Naive thymus-derived CD4-positive, alpha-beta T cell (primary cell): ENCODE measurements at regions of chr16 and their contacts with region 1.

Region 1: DNA sequence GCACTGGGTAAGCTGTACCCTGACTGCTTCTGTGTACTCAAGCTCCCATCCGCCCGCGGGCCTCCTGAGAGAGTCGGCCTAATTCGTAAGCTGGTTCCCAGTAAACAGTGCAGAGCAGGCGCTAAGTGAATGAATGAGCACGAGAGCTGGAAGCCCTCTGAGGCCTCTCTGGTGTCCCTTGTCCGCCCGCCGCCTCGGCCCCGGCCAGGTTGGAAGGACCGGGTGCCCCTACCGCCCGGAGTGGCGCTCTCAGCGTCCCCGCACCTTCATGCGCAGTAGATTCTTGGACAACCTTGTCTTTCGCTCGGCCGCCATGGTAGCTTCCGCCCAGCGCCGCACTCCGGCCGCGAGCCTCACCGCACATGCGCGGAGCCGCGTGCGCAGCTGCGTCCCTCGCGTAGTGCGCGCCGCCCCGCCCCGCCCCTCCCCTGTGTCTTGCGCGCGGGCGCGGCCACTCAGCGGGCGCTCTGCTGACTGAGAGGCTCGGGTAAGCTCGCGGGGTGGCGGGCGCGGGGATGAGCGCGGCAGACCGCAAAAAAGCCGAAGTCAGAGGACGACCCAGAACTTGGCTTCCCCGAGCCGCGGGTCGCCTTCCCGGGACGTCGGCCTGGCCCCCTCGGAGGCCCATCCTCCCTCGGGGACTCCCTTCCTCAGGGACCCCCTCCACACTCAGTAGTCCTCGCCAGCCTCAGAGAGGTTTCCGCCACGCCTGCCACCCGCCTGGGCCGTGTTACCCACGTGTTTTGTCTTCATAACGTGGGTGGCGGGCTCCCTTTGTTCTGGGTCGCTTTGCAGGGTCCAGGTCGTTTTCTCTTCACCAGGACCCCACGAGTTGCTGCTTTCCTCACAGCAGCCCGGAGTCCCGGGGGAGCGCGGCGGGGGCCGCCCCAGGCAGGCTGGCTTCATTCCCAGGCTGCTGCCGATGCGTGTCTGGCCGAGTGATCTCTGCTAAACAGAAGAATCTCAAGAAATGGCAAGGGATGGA is at the start of gene MPHOSPH6:
- DNase-seq: peak; percentile 84 to 91 (median 88)
- ATAC-seq: peak; percentile 98
- H3K4me3 ChIP-seq: peak within 1 kb of the TSS; percentile 77
- H3K4me3 Mint-ChIP-seq: peak within 1 kb of the TSS; percentile 80 to 97 (median 95)
- H3K27ac ChIP-seq: peak within 1 kb of the TSS; percentile 84
- H3K27ac Mint-ChIP-seq: peak within 1 kb of the TSS; percentile 78 to 98 (median 96)
- H3K4me1 ChIP-seq: peaks cover 9 to 12% of the 10 kb centered on the region in 2 donors
- H3K4me1 Mint-ChIP-seq: peaks cover 18 to 38% (median 32%) of the 10 kb centered on the region in 7 donors
- H3K27me3 ChIP-seq: peaks cover 6% of the 10 kb centered on the region in 2 donors
- H3K27me3 Mint-ChIP-seq: peaks cover 8 to 41% (median 28%) of the 10 kb centered on the region in 5 donors
- total RNA-seq, gene MPHOSPH6: 15.6 to 30.4 (median 23.3) TPM

Region 2: GRCh38 chr16:81745704-81746558 is 424.2 kb before region 1 on chr16:
- CTCF ChIA-PET with region 1: no interaction called
- POLR2A ChIA-PET with region 1: no interaction called
- intact Hi-C with region 1: loop called in 1 of 2 experiments (anchors 5 kb)
- DNase-seq: peak; percentile 53 to 75 (median 71)
- ATAC-seq: peak; percentile 97
- H3K4me3 ChIP-seq: peak overlapping the region; percentile 66
- H3K4me3 Mint-ChIP-seq: peak overlapping the region; percentile 82 to 90 (median 86)
- H3K27ac ChIP-seq: peak overlapping the region; percentile 65
- H3K27ac Mint-ChIP-seq: peak overlapping the region; percentile 83 to 95 (median 88)
- H3K4me1 ChIP-seq: peaks cover 4 to 10% of the 10 kb centered on the region in 2 donors
- H3K4me1 Mint-ChIP-seq: peaks cover 6 to 33% (median 10%) of the 10 kb centered on the region in 7 donors
- H3K27me3 ChIP-seq: no peaks in the 10 kb centered on the region
- H3K27me3 Mint-ChIP-seq: peaks cover 0 to 6% (median 0%) of the 10 kb centered on the region in 5 donors

Region 3: DNA sequence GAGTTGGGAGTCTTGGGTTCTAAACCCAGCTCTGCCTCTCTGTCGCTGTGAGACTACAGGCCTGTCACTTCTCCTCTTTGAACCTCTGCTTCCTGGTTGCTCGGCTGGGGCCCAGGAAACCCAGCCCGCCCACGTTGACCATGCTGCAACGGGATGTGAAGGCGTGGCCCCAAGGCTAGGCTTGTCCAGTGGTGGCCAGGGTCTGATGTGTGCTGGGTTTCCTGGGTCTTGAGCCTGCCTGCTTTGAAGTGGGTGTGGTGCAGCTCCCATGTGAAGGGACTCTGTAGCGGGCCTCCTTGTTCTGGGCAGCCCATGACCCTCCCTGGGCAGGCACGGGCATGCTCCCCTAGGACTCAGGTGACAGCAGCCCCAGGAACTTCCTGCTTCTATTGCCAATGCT is 241.2 kb before region 1 on chr16:
- CTCF ChIA-PET with region 1: no interaction called
- POLR2A ChIA-PET with region 1: no interaction called
- intact Hi-C with region 1: no loop called
- DNase-seq: no peak
- ATAC-seq: no peak
- H3K4me3 ChIP-seq: no peak overlapping the region
- H3K4me3 Mint-ChIP-seq: no peak overlapping the region
- H3K27ac ChIP-seq: no peak overlapping the region
- H3K27ac Mint-ChIP-seq: peak overlapping the region in 1 of 9 donors; percentile 58
- H3K4me1 ChIP-seq: peaks cover 0 to 2% of the 10 kb centered on the region in 2 donors
- H3K4me1 Mint-ChIP-seq: peaks cover 0 to 6% (median 0%) of the 10 kb centered on the region in 7 donors
- H3K27me3 ChIP-seq: no peaks in the 10 kb centered on the region
- H3K27me3 Mint-ChIP-seq: no peaks in the 10 kb centered on the region

Region 4: GRCh38 chr16:82031116-82032084 is 138.8 kb before region 1 on chr16:
- CTCF ChIA-PET with region 1: no interaction called
- POLR2A ChIA-PET with region 1: no interaction called
- intact Hi-C with region 1: no loop called
- DNase-seq: peak in 1 of 9 donors; percentile 11
- ATAC-seq: no peak
- H3K4me3 ChIP-seq: no peak overlapping the region
- H3K4me3 Mint-ChIP-seq: no peak overlapping the region
- H3K27ac ChIP-seq: no peak overlapping the region
- H3K27ac Mint-ChIP-seq: no peak overlapping the region
- H3K4me1 ChIP-seq: no peaks in the 10 kb centered on the region
- H3K4me1 Mint-ChIP-seq: no peaks in the 10 kb centered on the region
- H3K27me3 ChIP-seq: no peaks in the 10 kb centered on the region
- H3K27me3 Mint-ChIP-seq: peaks cover 7 to 29% (median 20%) of the 10 kb centered on the region in 5 donors

Region 5: DNA sequence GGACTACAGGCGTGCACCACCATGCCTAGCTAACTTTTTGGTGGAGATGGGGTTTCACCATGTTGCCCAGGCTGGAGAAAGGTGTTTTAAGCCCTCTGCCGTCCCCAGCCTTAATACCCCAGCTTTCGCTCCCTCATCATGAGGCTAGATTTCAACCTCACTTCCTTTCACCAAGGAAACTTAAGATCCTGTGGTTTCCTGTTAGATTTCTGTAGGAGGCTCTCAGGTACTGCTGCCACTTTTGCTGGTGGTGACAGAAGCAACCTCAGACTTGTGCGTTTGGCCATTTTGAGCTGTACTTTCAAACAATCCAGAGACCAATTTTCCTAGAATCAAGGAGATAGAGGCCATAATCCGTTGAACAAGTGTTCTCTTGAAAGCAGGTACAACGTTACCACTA is 36.4 kb before region 1 on chr16:
- CTCF ChIA-PET with region 1: no interaction called
- POLR2A ChIA-PET with region 1: no interaction called
- intact Hi-C with region 1: loop called in 1 of 2 experiments (anchors 5 kb)
- DNase-seq: peak in 6 of 9 donors; percentile 19 to 47 (median 30)
- ATAC-seq: peak; percentile 64
- H3K4me3 ChIP-seq: peak overlapping the region; percentile 42
- H3K4me3 Mint-ChIP-seq: peak overlapping the region; percentile 60 to 84 (median 70)
- H3K27ac ChIP-seq: peak overlapping the region; percentile 34
- H3K27ac Mint-ChIP-seq: peak overlapping the region; percentile 34 to 92 (median 65)
- H3K4me1 ChIP-seq: peaks cover 5 to 11% of the 10 kb centered on the region in 2 donors
- H3K4me1 Mint-ChIP-seq: peaks cover 8 to 25% (median 18%) of the 10 kb centered on the region in 7 donors
- H3K27me3 ChIP-seq: no peaks in the 10 kb centered on the region
- H3K27me3 Mint-ChIP-seq: peaks cover 0 to 2% (median 0%) of the 10 kb centered on the region in 5 donors

Region 6: GRCh38 chr16:82229796-82230619 is 59.9 kb after region 1 on chr16:
- CTCF ChIA-PET with region 1: no interaction called
- POLR2A ChIA-PET with region 1: no interaction called
- intact Hi-C with region 1: loop called in 1 of 2 experiments (anchors 2 kb)
- DNase-seq: peak; percentile 14 to 64 (median 35)
- ATAC-seq: peak; percentile 56
- H3K4me3 ChIP-seq: no peak overlapping the region
- H3K4me3 Mint-ChIP-seq: no peak overlapping the region
- H3K27ac ChIP-seq: no peak overlapping the region
- H3K27ac Mint-ChIP-seq: peak overlapping the region in 1 of 9 donors; percentile 1
- H3K4me1 ChIP-seq: no peaks in the 10 kb centered on the region
- H3K4me1 Mint-ChIP-seq: peaks cover 0 to 4% (median 0%) of the 10 kb centered on the region in 7 donors
- H3K27me3 ChIP-seq: no peaks in the 10 kb centered on the region
- H3K27me3 Mint-ChIP-seq: peaks cover 9 to 24% (median 22%) of the 10 kb centered on the region in 5 donors

Region 7: DNA sequence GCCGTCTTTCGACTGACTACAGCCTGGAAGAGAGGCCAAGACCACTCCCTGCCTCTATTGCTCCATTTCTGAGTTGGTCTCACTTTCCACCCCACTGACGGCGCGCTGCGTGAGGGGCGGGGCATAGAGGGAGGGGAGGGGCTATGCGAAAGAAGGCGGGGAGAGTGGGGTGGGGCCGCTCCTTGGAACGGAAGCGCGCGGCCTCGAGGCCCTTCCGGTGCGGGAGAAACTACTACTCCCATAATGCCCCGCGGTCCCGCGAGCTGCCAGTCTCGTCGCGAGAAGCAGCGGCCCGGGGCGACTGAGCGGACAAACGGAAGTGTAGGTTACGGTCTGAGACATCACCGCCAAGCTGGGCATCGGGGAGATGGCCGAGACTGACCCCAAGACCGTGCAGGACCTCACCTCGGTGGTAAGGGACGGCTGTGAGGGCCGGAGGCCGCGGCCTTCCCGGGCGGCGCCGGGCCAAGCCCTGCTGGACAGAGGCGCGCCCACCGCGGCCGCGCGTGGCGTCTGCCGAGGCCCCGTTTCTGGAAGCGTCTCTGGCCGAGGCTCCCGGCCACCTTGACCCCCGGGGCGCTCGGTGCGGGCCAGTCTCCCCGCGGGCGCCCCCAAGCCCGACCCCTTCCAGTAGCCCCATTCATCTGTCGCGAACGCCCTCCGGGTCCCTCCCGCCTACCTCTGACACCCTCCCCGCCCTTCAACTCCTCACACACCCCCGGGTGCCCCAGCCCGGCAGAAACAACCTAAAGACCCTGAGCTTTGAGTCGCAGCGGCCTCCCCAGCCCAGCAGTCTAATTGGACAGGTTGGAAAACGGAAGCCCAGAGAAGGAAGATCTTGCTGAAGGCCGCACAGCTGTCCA is 1637.8 kb after region 1 on chr16 and contains the start of gene HSBP1:
- CTCF ChIA-PET with region 1: no interaction called
- POLR2A ChIA-PET with region 1: no interaction called
- intact Hi-C with region 1: loop called in 1 of 2 experiments (anchors 1 kb)
- DNase-seq: peak; percentile 85 to 93 (median 91)
- ATAC-seq: peak; percentile 100
- H3K4me3 ChIP-seq: peak within 1 kb of the TSS; percentile 90
- H3K4me3 Mint-ChIP-seq: peak within 1 kb of the TSS; percentile 91 to 99 (median 98)
- H3K27ac ChIP-seq: peak within 1 kb of the TSS; percentile 87
- H3K27ac Mint-ChIP-seq: peak within 1 kb of the TSS; percentile 87 to 98 (median 95)
- H3K4me1 ChIP-seq: peaks cover 9 to 21% of the 10 kb centered on the region in 2 donors
- H3K4me1 Mint-ChIP-seq: peaks cover 19 to 55% (median 48%) of the 10 kb centered on the region in 7 donors
- H3K27me3 ChIP-seq: no peaks in the 10 kb centered on the region
- H3K27me3 Mint-ChIP-seq: peaks cover 0 to 5% (median 0%) of the 10 kb centered on the region in 5 donors
- total RNA-seq, gene HSBP1: 20.6 to 78.3 (median 32.3) TPM